ENCODE measurements at regions of chr1 and their contacts with region 1.

Region 1: GRCh38 chr1:211944733-211945500 is 90.4 kb downstream of the INTS7 start:
- DNase-seq: peak; percentile 85
- H3K4me3 Mint-ChIP-seq: no peak overlapping the region
- H3K27ac Mint-ChIP-seq: peak overlapping the region; percentile 43
- H3K4me1 Mint-ChIP-seq: peaks cover 14% of the 10 kb centered on the region
- H3K27me3 Mint-ChIP-seq: no peaks in the 10 kb centered on the region
- CTCF ChIP-seq: peak; percentile 43

Region 2: GRCh38 chr1:211830330-211831142 is 114.4 kb before region 1 on chr1 and contains the start of gene LPGAT1:
- CTCF ChIA-PET with region 1: interaction called, 6 read pairs
- intact Hi-C with region 1: loop called (anchors 2 kb)
- DNase-seq: peak; percentile 90
- H3K4me3 Mint-ChIP-seq: peak within 1 kb of the TSS; percentile 79
- H3K27ac Mint-ChIP-seq: peak within 1 kb of the TSS; percentile 65
- H3K4me1 Mint-ChIP-seq: peaks cover 17% of the 10 kb centered on the region
- H3K27me3 Mint-ChIP-seq: no peaks in the 10 kb centered on the region
- CTCF ChIP-seq: peak; percentile 70
- total RNA-seq, gene LPGAT1: 50.6 and 67.7 TPM in 2 replicates

Region 3: DNA sequence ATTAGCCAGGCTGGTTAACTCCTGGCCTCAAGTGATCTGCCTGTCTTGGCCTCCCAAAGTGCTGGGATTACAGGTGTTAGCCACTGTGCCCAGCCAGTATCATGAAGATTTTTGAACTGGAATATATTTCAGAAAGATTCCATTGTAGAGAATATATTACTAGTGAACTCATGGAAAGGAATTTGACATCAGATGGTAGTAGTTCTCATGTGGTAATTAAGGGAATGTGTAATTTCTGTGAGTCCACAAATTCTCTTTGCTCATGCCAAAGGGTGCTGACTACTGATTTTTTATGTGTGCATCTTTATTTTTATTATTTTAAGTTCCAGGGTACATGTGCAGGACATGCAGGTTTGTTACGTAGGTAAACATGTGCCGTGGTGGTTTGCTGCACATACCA is 101.1 kb after region 1 on chr1:
- CTCF ChIA-PET with region 1: no interaction called
- intact Hi-C with region 1: no loop called
- DNase-seq: no peak
- H3K4me3 Mint-ChIP-seq: no peak overlapping the region
- H3K27ac Mint-ChIP-seq: no peak overlapping the region
- H3K4me1 Mint-ChIP-seq: peaks cover 4% of the 10 kb centered on the region
- H3K27me3 Mint-ChIP-seq: no peaks in the 10 kb centered on the region
- CTCF ChIP-seq: no peak

Region 4: DNA sequence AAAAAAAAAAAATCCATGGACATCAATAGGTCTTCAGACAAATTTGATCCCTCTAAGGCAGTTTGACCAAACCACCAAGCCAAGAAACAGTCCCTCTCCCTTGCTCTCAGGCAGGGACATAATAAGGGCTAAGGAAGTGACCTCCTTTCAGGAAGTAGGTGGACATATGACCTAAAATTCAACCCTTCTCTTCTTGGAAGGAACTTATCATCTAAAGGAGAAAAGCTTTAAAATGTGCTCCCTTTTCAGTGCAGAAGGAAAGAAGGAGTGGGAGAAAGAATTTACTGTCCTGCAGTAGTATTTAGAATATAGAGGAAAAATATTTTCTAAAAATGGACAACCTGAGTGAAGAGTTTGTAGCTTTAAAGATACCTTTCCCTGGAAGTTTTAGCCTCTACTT is 208.7 kb after region 1 on chr1:
- CTCF ChIA-PET with region 1: no interaction called
- intact Hi-C with region 1: no loop called
- DNase-seq: no peak
- H3K4me3 Mint-ChIP-seq: no peak overlapping the region
- H3K27ac Mint-ChIP-seq: no peak overlapping the region
- H3K4me1 Mint-ChIP-seq: no peaks in the 10 kb centered on the region
- H3K27me3 Mint-ChIP-seq: no peaks in the 10 kb centered on the region
- CTCF ChIP-seq: no peak